ENCODE measurements at regions of chr12 and their contacts with region 1.

Region 1: GRCh38 chr12:68158432-68158831 is 1.1 kb downstream of the IFNG start:
- DNase-seq: no peak
- ATAC-seq: peak; percentile 55; the same call in 2 of the 3 replicates
- H3K4me3 ChIP-seq: no peak overlapping the region
- H3K27ac ChIP-seq: no peak overlapping the region
- H3K4me1 ChIP-seq: peaks cover 11% of the 10 kb centered on the region
- H3K27me3 ChIP-seq: peaks cover 0 to 3% of the 10 kb centered on the region in 2 experiments; a peak in 1 of 4 replicates
- CTCF ChIP-seq: peak; percentile 38 to 47 (median 41); a peak in 5 of 6 replicates
- EP300 ChIP-seq: no peak
- POLR2A ChIP-seq: no peak
- RAD21 ChIP-seq: peak; percentile 65

Region 2: DNA sequence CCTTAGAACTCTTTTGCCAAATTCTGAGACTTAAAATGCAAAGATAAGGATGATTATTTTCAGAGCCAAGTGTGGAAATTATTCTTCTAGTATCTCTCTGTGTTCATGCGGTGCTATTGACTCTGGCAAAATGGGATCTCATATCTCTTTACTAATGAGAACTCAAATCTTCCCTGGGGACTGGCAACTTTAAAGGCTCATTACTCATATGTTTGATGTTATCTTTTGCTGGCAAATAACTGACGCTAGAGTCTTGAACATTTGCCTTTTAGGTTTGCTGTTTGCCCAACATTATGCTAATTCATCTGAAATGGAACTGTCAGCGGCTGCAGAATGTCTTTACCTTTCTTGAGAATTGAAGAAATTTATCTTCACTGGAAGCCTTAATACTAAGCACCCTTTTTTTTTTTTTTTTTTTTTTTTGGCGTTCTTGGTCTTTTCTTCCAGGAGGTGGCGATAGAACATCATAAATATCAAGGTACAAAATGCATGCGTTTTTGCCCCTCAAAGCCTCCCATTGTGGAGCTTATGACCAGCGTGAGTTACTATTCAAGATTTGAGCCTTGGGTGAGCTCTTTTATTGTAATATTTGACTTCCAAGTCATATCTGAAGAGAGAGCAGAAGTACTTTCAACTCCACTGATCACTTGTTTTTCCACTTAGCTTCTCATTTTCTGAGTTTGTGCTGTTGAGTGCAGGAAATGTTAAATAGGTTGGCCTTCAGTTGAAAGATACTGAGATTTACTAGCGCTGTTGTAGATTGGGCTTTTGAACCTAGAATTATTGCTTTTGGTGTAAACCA is 802.7 kb before region 1 on chr12:
- CTCF ChIA-PET with region 1: interaction called, 11 read pairs
- POLR2A ChIA-PET with region 1: no interaction called
- RAD21 ChIA-PET with region 1: interaction called, 3 read pairs
- SMC1A ChIA-PET with region 1: interaction called, 4 read pairs
- in situ Hi-C with region 1: no loop called
- intact Hi-C with region 1: no loop called
- DNase-seq: peak; percentile 16
- ATAC-seq: peak; percentile 76
- H3K4me3 ChIP-seq: no peak overlapping the region
- H3K27ac ChIP-seq: no peak overlapping the region
- H3K4me1 ChIP-seq: no peaks in the 10 kb centered on the region
- H3K27me3 ChIP-seq: no peaks in the 10 kb centered on the region
- CTCF ChIP-seq: peak; percentile 42 to 58 (median 53); a peak in 5 of 6 replicates
- EP300 ChIP-seq: no peak
- POLR2A ChIP-seq: no peak
- RAD21 ChIP-seq: peak; percentile 78

Region 3: DNA sequence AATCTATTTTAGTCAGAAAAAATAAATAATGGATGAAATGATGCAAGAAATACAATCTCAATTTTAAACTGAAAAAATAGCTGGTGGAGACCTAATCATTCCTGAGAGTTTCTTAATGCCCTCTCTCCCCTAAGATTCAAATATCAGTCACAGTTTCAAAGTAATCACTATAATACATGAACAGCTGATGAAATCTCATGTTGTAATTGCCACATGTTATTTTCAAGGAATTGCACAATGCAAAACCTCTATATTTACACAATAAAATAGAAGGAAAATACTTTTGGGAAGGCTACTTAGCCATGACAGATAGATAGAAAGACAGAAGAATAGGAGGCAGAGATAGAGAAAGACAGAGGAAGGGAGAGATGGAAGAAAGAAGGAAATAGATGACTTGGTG is 151.0 kb before region 1 on chr12:
- CTCF ChIA-PET with region 1: interaction called, 12 read pairs
- POLR2A ChIA-PET with region 1: no interaction called
- RAD21 ChIA-PET with region 1: interaction called, 5 read pairs
- SMC1A ChIA-PET with region 1: interaction called, 12 read pairs
- in situ Hi-C with region 1: no loop called
- intact Hi-C with region 1: no loop called
- DNase-seq: no peak
- ATAC-seq: no peak
- H3K4me3 ChIP-seq: no peak overlapping the region
- H3K27ac ChIP-seq: no peak overlapping the region
- H3K4me1 ChIP-seq: peaks cover 4% of the 10 kb centered on the region; the same call in 1 of the 2 replicates
- H3K27me3 ChIP-seq: no peaks in the 10 kb centered on the region
- CTCF ChIP-seq: no peak
- EP300 ChIP-seq: no peak
- POLR2A ChIP-seq: no peak
- RAD21 ChIP-seq: no peak

Region 4: DNA sequence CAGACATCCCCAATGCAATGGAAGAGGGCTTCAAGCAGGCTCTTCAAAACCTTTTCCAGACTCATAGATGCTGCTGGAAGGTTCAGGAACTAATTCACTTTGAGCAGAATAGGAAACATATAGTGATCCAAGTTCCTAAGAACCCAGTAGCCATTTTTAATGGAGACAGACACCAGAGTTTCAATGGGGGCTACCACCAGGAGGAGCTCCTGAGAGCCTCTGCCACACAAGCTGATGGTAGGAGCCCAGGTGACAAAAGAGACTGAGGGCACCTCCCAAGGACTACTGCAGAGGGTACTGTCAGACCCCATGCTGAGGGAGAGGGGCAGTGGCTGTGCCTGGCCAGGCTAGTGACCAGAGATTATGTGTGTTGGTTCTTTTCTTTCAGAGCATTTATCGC is 44.8 kb before region 1 on chr12:
- CTCF ChIA-PET with region 1: interaction called, 93 read pairs
- POLR2A ChIA-PET with region 1: no interaction called
- RAD21 ChIA-PET with region 1: interaction called, 25 read pairs
- SMC1A ChIA-PET with region 1: interaction called, 53 read pairs
- in situ Hi-C with region 1: no loop called
- intact Hi-C with region 1: loop called (anchors 1 kb)
- DNase-seq: no peak
- ATAC-seq: peak; percentile 79
- H3K4me3 ChIP-seq: no peak overlapping the region
- H3K27ac ChIP-seq: no peak overlapping the region
- H3K4me1 ChIP-seq: peaks cover 3% of the 10 kb centered on the region; the same call in 1 of the 2 replicates
- H3K27me3 ChIP-seq: no peaks in the 10 kb centered on the region
- CTCF ChIP-seq: peak; percentile 42 to 67 (median 63)
- EP300 ChIP-seq: no peak
- POLR2A ChIP-seq: no peak
- RAD21 ChIP-seq: peak; percentile 38; the same call in 1 of the 2 replicates

Region 5: GRCh38 chr12:68140556-68140955 is 17.9 kb before region 1 on chr12:
- CTCF ChIA-PET with region 1: interaction called, 21 read pairs
- POLR2A ChIA-PET with region 1: no interaction called
- RAD21 ChIA-PET with region 1: interaction called, 4 read pairs
- SMC1A ChIA-PET with region 1: interaction called, 7 read pairs
- in situ Hi-C with region 1: no loop called
- intact Hi-C with region 1: no loop called
- DNase-seq: no peak
- ATAC-seq: no peak
- H3K4me3 ChIP-seq: no peak overlapping the region
- H3K27ac ChIP-seq: no peak overlapping the region
- H3K4me1 ChIP-seq: no peaks in the 10 kb centered on the region
- H3K27me3 ChIP-seq: no peaks in the 10 kb centered on the region
- CTCF ChIP-seq: no peak
- EP300 ChIP-seq: no peak
- POLR2A ChIP-seq: no peak
- RAD21 ChIP-seq: no peak

Region 6: GRCh38 chr12:68175557-68176061 is 17.2 kb after region 1 on chr12:
- CTCF ChIA-PET with region 1: interaction called, 11 read pairs
- POLR2A ChIA-PET with region 1: interaction called, 3 read pairs
- RAD21 ChIA-PET with region 1: no interaction called
- SMC1A ChIA-PET with region 1: interaction called, 8 read pairs
- in situ Hi-C with region 1: no loop called
- intact Hi-C with region 1: no loop called
- DNase-seq: peak; percentile 63
- ATAC-seq: peak; percentile 93
- H3K4me3 ChIP-seq: peak overlapping the region; percentile 3; the same call in 1 of the 2 replicates
- H3K27ac ChIP-seq: no peak overlapping the region
- H3K4me1 ChIP-seq: 0 out of 2 replicates have a peak, but pooled peaks cover 2% of the 10 kb centered on the region
- H3K27me3 ChIP-seq: no peaks in the 10 kb centered on the region; a peak in 1 of 4 replicates
- CTCF ChIP-seq: no peak
- EP300 ChIP-seq: no peak
- POLR2A ChIP-seq: no peak
- RAD21 ChIP-seq: no peak

Measured in GM12878 (cell line).